SK-N-SH (cell line): ENCODE measurements at regions of chr11 and their contacts with region 1.

Region 1: GRCh38 chr11:123580557-123581275 is 73.7 kb downstream of the SCN3B start:
- DNase-seq: peak; percentile 89
- H3K4me3 ChIP-seq: no peak overlapping the region
- H3K27ac ChIP-seq: no peak overlapping the region
- H3K4me1 ChIP-seq: peaks cover 6 to 19% of the 10 kb centered on the region in 2 experiments; a peak in 2 of 4 replicates
- H3K27me3 ChIP-seq: no peaks in the 10 kb centered on the region
- CTCF ChIP-seq: peak; percentile 87
- EP300 ChIP-seq: no peak
- RAD21 ChIP-seq: peak; percentile 77

Region 2: DNA sequence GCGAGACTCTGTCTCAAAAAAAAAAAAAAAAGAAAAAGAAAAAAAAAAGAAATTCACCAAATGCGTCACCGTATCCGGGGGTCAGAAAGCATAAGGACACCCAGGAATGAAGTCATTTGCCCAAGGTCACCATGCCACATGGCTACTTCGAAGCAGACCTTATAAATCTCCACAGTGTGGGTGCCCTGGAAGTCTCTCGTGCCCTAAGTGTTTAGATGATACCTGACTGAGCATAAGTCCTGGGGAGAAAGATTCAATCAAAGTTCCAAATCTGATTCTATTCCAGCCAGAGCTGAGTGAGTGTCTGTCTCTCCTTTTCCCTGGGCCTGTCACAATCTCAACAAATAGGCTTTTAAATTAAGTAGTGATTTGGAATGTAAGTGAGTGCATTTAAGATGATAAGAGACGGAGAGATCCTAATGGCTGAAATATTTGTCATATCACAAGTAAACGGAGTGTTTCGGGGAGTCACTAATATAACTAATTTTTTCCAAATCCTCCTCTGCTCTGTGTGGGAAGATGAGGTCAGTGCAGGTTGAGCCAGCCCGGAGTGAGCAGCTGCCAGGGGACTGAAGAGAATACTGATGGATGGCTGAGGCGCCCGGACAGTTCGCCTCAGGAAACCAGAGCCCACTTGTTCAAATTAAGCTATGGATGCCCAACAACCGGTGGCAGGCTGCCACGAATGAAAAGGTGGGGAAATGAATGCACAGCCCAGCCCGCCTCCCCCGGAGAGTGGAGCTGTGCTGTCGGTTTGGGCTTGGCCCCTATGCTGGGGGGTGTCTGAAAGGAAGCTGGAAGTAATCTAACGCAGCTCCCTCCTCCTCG is 540.9 kb before region 1 on chr11:
- CTCF ChIA-PET with region 1: no interaction called
- POLR2A ChIA-PET with region 1: no interaction called
- DNase-seq: peak; percentile 78
- H3K4me3 ChIP-seq: 0 out of 4 replicates have a peak overlapping the region, but pooled peaks of 1 of the 2 experiments have one; percentile 3
- H3K27ac ChIP-seq: peak overlapping the region; percentile 23 to 72; a peak in 3 of 4 replicates
- H3K4me1 ChIP-seq: peaks cover 9% of the 10 kb centered on the region in 2 experiments; a peak in 2 of 4 replicates
- H3K27me3 ChIP-seq: no peaks in the 10 kb centered on the region
- CTCF ChIP-seq: no peak
- EP300 ChIP-seq: 0 out of 4 replicates have a peak, but pooled peaks of 1 of the 2 experiments have one; percentile 49
- RAD21 ChIP-seq: no peak

Region 3: DNA sequence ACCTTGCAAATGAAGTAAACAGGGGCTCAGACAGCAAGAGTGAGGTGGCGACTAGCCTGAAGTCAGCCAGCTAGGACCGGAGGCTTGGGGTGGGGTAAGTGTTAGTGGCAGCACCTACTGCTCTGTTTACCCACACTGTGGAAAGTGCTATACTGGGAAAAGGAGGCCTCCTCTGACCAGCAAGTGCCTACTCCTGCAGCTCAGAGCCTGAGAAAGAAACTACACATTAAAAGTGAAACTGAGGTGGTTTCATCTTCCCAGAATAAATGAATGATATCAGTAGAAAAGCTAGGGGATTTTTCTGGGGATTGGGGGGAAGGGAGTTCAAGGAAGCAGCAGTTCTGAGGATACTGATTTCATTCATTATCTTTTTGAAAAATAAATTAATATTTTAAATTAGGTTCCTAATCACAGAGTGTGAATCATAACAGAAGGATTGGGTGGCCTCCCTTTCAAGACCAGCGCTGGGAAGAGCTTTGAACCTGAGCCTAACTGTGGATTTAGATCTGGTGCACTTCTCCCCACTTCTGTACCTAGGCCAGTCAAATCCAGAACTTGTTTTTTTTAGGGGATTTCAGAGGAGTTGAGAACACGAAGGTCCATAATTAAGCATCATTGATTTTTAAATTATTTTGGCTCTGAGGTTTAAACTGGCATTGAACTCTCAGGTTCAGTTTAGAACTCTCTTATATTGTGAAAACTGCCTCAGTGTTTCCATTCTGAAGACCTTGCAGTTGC is 198.7 kb before region 1 on chr11:
- CTCF ChIA-PET with region 1: no interaction called
- POLR2A ChIA-PET with region 1: no interaction called
- DNase-seq: no peak
- H3K4me3 ChIP-seq: no peak overlapping the region
- H3K27ac ChIP-seq: no peak overlapping the region
- H3K4me1 ChIP-seq: peaks cover 0 to 7% of the 10 kb centered on the region in 2 experiments; a peak in 3 of 4 replicates
- H3K27me3 ChIP-seq: peaks cover 8% of the 10 kb centered on the region; the same call in 1 of the 2 replicates
- CTCF ChIP-seq: no peak
- EP300 ChIP-seq: no peak
- RAD21 ChIP-seq: no peak

Region 4: GRCh38 chr11:123490532-123490931 is 90.2 kb before region 1 on chr11:
- CTCF ChIA-PET with region 1: interaction called, 10 read pairs
- POLR2A ChIA-PET with region 1: no interaction called
- DNase-seq: no peak
- H3K4me3 ChIP-seq: no peak overlapping the region
- H3K27ac ChIP-seq: no peak overlapping the region
- H3K4me1 ChIP-seq: peaks cover 0 to 9% of the 10 kb centered on the region in 2 experiments; a peak in 1 of 4 replicates
- H3K27me3 ChIP-seq: no peaks in the 10 kb centered on the region
- CTCF ChIP-seq: no peak
- EP300 ChIP-seq: no peak
- RAD21 ChIP-seq: no peak

Region 5: DNA sequence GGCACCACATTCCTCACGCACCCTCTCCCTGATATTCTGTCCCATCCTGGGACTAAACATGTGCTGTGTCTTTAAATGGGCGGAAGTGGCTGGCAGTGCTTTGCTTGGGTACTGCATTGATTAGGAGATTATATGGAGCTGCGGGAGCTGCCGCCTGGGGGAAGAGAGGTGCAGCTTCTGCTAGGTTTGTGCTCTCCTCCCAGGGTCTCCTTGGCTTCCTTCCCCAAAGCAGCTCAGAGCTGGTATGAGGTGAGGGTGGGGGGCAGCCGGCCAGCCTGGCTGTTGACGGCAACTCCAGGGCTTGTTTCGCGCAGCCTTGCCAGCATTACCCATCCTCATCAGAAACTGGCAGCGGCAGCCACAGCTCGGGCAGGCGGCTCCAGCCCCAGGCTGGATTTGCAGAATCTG is 55.2 kb before region 1 on chr11:
- CTCF ChIA-PET with region 1: interaction called, 19 read pairs
- POLR2A ChIA-PET with region 1: no interaction called
- DNase-seq: peak; percentile 72
- H3K4me3 ChIP-seq: peak overlapping the region in 1 of 2 experiments; percentile 34; a peak in 1 of 4 replicates
- H3K27ac ChIP-seq: peak overlapping the region in 1 of 2 experiments; percentile 50; a peak in 2 of 4 replicates
- H3K4me1 ChIP-seq: peaks cover 0 to 17% of the 10 kb centered on the region in 2 experiments; a peak in 1 of 4 replicates
- H3K27me3 ChIP-seq: no peaks in the 10 kb centered on the region
- CTCF ChIP-seq: no peak
- EP300 ChIP-seq: no peak
- RAD21 ChIP-seq: no peak

Region 6: DNA sequence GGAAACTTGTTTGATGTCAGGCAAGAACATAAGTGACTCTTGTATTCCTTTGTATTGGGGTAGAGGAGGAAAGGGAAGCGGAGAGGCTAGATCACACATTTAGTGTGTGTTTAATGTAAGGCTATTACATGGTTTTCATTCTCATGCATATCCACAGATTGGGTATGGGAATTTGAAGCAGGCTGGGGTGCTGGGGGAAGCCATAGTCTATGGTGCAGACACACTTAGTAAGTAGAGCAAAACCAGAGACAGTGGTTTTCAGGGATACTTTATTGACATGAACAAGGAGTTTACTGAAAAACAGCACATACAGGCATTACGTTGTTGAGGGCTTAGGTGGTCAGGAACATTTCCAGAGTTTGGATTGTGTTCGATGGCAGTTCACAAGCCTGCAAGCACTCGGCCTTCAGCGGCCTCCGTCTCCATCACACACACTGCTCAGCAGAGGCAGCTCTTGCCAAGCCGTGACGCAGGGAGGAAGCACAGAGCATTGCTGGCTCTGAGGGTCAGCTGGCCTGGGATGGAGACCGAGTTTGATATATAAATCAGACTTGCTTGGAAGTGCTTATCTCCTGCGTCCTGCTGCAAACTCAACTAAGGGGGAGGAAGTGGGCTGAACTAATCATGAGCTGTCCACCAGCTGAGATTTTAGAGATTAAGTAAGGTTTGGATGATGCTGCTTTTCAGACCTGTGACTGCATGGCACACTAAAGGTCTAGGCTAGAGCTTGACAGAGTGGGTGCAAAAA is 48.4 kb after region 1 on chr11:
- CTCF ChIA-PET with region 1: interaction called, 28 read pairs
- POLR2A ChIA-PET with region 1: no interaction called
- DNase-seq: peak; percentile 74
- H3K4me3 ChIP-seq: no peak overlapping the region
- H3K27ac ChIP-seq: peak overlapping the region; percentile 43 to 85; a peak in 3 of 4 replicates
- H3K4me1 ChIP-seq: peaks cover 4 to 12% of the 10 kb centered on the region in 2 experiments; a peak in 2 of 4 replicates
- H3K27me3 ChIP-seq: no peaks in the 10 kb centered on the region
- CTCF ChIP-seq: no peak
- EP300 ChIP-seq: peak; percentile 23 to 28; a peak in 1 of 4 replicates
- RAD21 ChIP-seq: peak; percentile 21

Region 7: DNA sequence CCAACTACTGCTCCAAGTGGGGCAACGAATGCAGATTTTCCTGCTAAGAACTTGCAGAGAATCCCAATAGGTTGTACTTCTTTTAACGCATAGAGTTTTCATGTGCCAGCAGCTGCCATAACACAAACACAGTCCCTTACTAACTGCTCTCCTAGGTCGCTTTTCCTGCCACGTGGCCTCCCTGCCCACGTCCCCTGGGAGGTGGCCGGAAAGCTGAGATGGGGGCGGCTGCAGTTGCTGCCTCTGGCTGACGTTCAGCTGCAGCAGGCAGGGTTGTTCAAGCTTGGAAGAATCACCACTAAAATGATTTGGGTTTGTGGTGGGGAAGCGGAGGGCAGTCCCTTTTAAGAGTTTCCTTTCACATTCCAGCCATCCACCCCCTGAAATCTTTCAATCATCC is 121.4 kb after region 1 on chr11:
- CTCF ChIA-PET with region 1: interaction called, 48 read pairs
- POLR2A ChIA-PET with region 1: no interaction called
- DNase-seq: no peak
- H3K4me3 ChIP-seq: no peak overlapping the region
- H3K27ac ChIP-seq: no peak overlapping the region
- H3K4me1 ChIP-seq: peaks cover 0 to 2% of the 10 kb centered on the region in 2 experiments; a peak in 2 of 4 replicates
- H3K27me3 ChIP-seq: peaks cover 11% of the 10 kb centered on the region; the same call in 1 of the 2 replicates
- CTCF ChIP-seq: no peak
- EP300 ChIP-seq: no peak
- RAD21 ChIP-seq: no peak